Activated CD8-positive, alpha-beta T cell treated with anti-CD3 and anti-CD28 coated beads for 36 hours (primary cell): ENCODE measurements at regions of chr13 and their contacts with region 1.

Region 1: DNA sequence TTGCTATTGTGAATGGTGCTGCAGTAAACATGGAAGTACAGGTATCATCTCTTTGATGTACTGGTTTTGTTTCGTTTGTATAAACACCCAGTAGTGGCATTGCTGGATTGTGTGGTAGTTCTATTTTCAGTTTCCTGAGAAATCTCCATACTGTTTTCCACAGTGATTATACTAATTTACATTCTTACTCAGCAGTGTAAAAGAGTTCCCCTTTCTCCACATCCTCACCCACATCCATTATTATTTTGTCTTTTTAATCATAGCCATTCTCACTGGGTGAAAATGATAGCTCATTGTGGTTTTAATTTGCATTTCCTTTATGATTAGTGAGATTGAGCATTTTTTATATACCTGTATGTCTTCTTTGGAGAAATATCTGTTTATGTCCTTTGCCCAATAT is 62.3 kb upstream of the PARP4 start:
- DNase-seq: no peak
- ATAC-seq: peak; percentile 45
- H3K4me3 Mint-ChIP-seq: no peak overlapping the region
- H3K27ac Mint-ChIP-seq: no peak overlapping the region
- H3K4me1 Mint-ChIP-seq: peaks cover 11% of the 10 kb centered on the region
- H3K27me3 Mint-ChIP-seq: peaks cover 6% of the 10 kb centered on the region
- CTCF ChIP-seq: no peak

Region 2: GRCh38 chr13:24625870-24626849 is 51.3 kb after region 1 on chr13:
- CTCF ChIA-PET with region 1: interaction called, 10 read pairs
- POLR2A ChIA-PET with region 1: no interaction called
- intact Hi-C with region 1: no loop called
- DNase-seq: peak; percentile 51
- ATAC-seq: peak; percentile 76
- H3K4me3 Mint-ChIP-seq: no peak overlapping the region
- H3K27ac Mint-ChIP-seq: peak overlapping the region; percentile 95
- H3K4me1 Mint-ChIP-seq: peaks cover 38% of the 10 kb centered on the region
- H3K27me3 Mint-ChIP-seq: no peaks in the 10 kb centered on the region
- CTCF ChIP-seq: no peak

Region 3: DNA sequence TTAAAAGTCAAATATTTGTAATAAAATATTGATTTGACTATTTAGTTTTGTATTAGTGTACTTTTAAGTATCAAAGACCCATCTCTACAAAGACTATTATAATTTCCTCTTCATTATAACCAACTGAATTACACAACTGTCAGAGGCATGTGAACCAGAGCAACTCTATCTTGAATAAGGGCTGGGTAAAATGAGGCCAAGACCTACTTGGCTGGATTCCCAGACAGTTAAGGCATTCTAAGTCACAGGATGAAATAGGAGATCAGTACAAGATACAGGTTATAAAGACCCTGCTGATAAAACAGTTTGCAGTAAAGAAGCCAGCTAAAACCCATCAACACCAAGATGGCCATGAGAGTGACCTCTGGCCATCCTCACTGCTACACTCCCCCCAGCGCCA is 69.2 kb after region 1 on chr13:
- CTCF ChIA-PET with region 1: no interaction called
- POLR2A ChIA-PET with region 1: no interaction called
- intact Hi-C with region 1: no loop called
- DNase-seq: no peak
- ATAC-seq: no peak
- H3K4me3 Mint-ChIP-seq: no peak overlapping the region
- H3K27ac Mint-ChIP-seq: no peak overlapping the region
- H3K4me1 Mint-ChIP-seq: peaks cover 8% of the 10 kb centered on the region
- H3K27me3 Mint-ChIP-seq: no peaks in the 10 kb centered on the region
- CTCF ChIP-seq: no peak